ENCODE measurements at regions of chr1 and their contacts with region 1.

Region 1: DNA sequence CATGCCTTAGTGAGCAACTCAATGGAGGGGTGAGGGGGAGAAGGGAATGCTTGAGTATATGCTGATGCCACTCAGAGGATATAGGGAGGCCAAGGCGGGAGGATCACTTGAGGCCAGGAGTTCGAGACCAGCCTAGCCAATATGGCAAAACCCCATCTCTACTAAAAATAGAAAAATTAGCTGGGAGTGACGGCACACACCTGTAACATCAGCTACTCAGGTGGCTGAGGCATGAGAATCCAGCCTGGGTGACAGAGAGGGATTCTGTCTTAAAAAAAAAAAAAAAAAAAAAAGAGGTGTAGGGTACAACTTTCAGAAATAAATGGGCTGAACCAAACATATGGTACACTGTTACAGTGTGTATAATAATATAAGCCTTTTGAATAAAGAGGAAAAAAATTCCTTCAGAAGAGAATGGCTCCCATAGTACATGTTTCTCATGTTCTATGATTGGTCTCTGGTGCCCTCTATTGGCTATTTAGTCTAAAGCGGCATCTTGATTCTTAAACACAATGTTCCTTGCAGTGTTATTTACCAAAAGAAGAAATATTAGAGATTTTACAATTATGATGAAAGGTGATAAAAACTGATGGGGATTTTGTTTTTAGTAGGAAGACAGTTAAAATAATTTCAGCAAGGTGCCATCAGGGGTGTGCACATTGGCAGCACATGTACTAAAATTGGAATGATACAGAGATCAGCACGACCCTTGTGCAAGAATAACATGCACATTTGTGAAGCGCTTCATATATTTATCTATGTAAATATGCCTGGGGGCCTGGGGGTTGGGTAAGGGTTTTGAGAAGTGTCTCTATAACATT is 109.8 kb downstream of the PATJ start:
- DNase-seq: peak in 1 of 2 donors; percentile 45
- ATAC-seq: peak in 7 of 8 donors; percentile 62 to 83 (median 67)
- H3K4me3 ChIP-seq: no peak overlapping the region
- H3K27ac ChIP-seq: no peak overlapping the region
- H3K4me1 ChIP-seq: peaks cover 0 to 8% (median 0%) of the 10 kb centered on the region in 9 donors
- H3K27me3 ChIP-seq: no peaks in the 10 kb centered on the region
- CTCF ChIP-seq: peak; percentile 39 to 86 (median 77)

Region 2: DNA sequence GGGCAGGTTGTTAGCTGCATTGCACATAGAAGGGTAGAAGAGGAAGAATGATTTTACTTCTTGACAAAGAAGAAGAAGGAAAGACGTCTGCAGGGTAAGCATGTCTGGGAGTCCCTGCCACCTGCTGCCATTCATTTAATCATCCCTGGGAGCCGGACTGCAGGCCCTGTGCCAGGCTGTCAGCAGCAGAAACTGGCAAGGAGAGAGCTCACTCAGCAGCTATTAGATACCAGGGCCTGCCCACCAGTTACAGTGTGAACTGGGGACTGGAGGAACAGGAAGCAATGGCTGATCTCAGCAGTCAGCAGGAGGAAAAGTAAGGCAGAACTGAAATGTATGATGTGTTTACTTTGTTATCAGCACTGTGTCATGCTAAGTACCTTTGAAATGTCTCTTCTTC is 1702.8 kb before region 1 on chr1:
- intact Hi-C with region 1: loop called in 1 of 10 experiments (anchors 10 kb)
- DNase-seq: peak; percentile 53 to 71
- ATAC-seq: peak; percentile 74 to 99 (median 92)
- H3K4me3 ChIP-seq: no peak overlapping the region
- H3K27ac ChIP-seq: no peak overlapping the region
- H3K4me1 ChIP-seq: peaks cover 0 to 8% (median 0%) of the 10 kb centered on the region in 9 donors
- H3K27me3 ChIP-seq: peaks cover 0 to 3% (median 0%) of the 10 kb centered on the region in 7 donors
- CTCF ChIP-seq: no peak

Region 3: DNA sequence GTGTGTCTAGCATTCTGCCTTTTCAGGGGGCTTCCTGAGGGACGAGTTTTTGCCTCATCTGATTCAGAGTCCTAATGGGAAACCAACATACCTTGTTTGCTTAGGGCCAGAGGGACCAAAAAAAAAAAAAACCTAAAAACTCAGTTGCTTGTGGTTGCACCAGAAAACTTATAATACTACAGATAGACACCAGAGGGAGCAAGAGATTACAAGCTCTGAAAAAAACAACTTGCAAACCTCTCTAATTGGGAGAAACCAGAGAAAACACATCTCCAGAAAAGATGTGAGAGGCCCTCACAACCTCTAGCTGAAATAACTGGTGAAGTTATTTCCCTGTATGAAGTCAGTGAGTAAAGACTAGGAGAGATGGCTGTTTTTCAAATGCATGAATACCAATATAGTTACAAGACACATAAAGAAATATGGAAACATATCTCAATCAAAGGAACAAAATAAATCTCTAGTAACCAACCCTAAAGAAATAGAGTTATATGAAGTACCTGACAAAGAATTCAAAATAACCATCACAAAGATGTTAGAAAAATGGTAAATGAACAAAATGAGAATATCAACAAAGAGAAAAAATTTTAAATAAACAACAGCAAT is 1003.4 kb before region 1 on chr1:
- intact Hi-C with region 1: loop called in 2 of 10 experiments (anchors 5 to 10 kb)
- DNase-seq: no peak
- ATAC-seq: no peak
- H3K4me3 ChIP-seq: no peak overlapping the region
- H3K27ac ChIP-seq: no peak overlapping the region
- H3K4me1 ChIP-seq: no peaks in the 10 kb centered on the region
- H3K27me3 ChIP-seq: no peaks in the 10 kb centered on the region
- CTCF ChIP-seq: peak; percentile 21 to 66 (median 59)

Region 4: DNA sequence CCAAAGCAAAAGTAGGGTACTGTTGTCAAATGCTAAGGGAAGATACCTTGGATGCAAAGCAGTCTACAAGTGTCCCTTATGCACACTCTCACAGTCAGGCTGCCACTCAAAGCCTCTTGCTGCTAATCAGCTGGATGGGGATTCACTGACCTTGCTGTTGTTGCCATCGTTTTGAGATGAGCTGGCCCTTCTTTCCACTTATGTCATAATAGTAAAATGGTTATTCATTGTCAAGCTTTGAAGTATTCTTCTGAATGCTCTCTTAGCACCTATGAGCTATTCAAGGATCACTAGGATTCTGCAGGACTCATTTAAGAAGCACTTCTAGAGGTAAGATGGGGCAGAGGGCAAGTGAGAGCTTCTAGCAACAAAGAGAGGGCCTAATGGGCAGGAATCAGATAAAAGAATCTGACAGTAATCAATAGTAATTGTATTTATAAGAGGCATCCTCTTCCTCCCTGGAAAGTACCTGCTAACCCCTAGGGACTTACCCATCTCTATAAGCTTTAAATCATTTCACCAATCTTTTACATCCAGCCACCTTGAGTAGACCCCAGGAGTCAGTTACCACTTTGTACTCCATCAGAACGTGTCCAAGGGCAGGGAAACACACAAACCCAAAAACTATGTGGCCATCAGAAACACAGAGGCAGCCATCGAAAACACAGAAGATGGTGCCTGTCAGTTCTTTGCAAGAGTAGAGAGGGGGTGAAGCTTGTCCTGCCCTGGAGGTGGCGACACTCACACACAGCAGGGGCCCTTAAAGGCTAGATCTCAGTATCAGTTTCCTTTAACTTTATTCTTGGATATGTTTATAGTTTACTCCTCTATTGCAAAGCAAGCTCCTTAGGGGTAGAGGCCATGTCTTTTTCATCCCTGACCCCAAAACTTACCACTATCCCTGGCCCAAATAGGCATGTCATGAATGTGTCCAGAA is 873.4 kb before region 1 on chr1:
- intact Hi-C with region 1: loop called in 5 of 10 experiments (anchors 5 to 10 kb)
- DNase-seq: peak in 1 of 2 donors; percentile 23
- ATAC-seq: peak in 4 of 8 donors; percentile 39 to 61 (median 43)
- H3K4me3 ChIP-seq: no peak overlapping the region
- H3K27ac ChIP-seq: no peak overlapping the region
- H3K4me1 ChIP-seq: peaks cover 0 to 14% (median 6%) of the 10 kb centered on the region in 9 donors
- H3K27me3 ChIP-seq: no peaks in the 10 kb centered on the region
- CTCF ChIP-seq: peak in 8 of 9 donors; percentile 16 to 67 (median 53)

Region 5: DNA sequence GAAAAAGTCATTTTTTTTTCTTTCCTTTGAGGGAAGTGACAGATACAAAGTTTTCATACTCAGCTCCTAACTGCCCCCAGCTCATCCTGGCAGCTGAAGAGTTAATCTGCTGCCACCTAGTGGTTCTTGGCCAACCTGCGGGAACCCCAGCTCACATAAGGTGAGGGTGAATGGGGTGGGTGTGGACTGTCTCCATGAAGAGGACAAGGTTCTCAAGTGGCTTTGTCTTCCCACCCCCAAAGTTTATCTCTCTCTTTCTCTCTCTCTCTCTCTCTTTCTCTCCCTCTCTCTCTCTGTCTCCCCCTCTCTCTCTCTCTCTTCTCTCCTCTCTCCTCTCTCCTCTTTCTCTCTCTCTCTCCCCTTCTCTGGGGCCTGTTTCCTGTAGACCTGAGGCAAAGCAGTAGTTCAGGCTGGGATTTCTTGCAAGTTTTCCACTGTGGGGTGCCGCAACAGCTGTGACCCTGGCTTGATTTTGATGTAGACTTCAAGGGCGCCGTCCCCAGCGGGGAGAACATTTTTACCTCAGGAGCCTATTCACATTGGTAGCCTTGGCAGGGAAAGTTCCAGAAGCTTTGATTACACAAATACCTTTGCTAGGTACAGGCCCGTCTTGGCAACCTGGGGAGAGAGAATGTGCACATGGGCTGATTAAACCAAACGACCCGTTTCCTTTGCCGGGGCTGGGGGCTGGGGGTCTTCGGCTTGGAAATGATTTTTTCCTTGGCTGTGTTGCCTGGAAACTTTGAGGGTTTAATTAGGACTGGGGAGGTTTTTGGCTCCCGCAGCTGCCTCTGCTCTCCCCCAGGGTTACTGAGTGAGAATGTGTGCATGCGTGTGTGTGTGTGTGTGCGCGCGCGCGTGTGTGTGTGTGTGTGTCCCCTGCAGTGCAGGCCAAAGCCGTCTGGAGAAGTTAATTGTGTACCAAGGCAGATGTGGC is 263.1 kb before region 1 on chr1:
- intact Hi-C with region 1: loop called in 1 of 10 experiments (anchors 10 kb)
- DNase-seq: peak; percentile 36 to 52
- ATAC-seq: peak; percentile 57 to 83 (median 74)
- H3K4me3 ChIP-seq: no peak overlapping the region
- H3K27ac ChIP-seq: no peak overlapping the region
- H3K4me1 ChIP-seq: no peaks in the 10 kb centered on the region
- H3K27me3 ChIP-seq: no peaks in the 10 kb centered on the region
- CTCF ChIP-seq: peak; percentile 40 to 75 (median 69)